ENCODE measurements at regions of chr3 and their contacts with region 1.

Region 1: GRCh38 chr3:160622263-160623045 is 54.5 kb upstream of the ARL14 start:
- DNase-seq: no peak
- ATAC-seq: no peak
- H3K4me3 ChIP-seq: no peak overlapping the region
- H3K27ac ChIP-seq: peak overlapping the region; percentile 13; the same call in 1 of the 2 replicates
- H3K4me1 ChIP-seq: no peaks in the 10 kb centered on the region
- H3K27me3 ChIP-seq: no peaks in the 10 kb centered on the region
- CTCF ChIP-seq: no peak

Region 2: DNA sequence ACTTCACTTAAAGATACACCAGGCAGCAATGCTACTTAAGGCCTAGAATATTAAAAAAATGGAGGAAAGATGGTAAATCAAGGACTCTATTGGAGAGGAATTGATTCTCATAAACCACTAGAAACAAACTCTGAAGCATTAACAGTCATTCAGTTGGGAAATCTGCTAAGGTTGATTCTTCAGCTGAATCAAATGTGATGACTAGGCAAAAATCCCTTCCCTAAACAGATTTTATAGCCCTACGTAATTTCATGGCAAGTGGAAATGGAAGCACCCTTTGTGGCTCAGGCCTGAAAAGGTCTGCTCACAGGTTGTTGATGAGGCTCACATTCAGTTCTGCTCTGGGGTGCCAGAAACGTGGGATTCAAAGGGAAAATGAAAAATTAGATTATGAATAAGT is 15.7 kb after region 1 on chr3:
- CTCF ChIA-PET with region 1: interaction called, 11 read pairs
- POLR2A ChIA-PET with region 1: no interaction called
- in situ Hi-C with region 1: no loop called
- intact Hi-C with region 1: no loop called
- DNase-seq: no peak
- ATAC-seq: no peak
- H3K4me3 ChIP-seq: no peak overlapping the region
- H3K27ac ChIP-seq: no peak overlapping the region
- H3K4me1 ChIP-seq: no peaks in the 10 kb centered on the region
- H3K27me3 ChIP-seq: no peaks in the 10 kb centered on the region
- CTCF ChIP-seq: no peak

Measured in Panc1 (cell line).